Calu3 (cell line): ENCODE measurements at regions of chr12 and their contacts with region 1.

Region 1: DNA sequence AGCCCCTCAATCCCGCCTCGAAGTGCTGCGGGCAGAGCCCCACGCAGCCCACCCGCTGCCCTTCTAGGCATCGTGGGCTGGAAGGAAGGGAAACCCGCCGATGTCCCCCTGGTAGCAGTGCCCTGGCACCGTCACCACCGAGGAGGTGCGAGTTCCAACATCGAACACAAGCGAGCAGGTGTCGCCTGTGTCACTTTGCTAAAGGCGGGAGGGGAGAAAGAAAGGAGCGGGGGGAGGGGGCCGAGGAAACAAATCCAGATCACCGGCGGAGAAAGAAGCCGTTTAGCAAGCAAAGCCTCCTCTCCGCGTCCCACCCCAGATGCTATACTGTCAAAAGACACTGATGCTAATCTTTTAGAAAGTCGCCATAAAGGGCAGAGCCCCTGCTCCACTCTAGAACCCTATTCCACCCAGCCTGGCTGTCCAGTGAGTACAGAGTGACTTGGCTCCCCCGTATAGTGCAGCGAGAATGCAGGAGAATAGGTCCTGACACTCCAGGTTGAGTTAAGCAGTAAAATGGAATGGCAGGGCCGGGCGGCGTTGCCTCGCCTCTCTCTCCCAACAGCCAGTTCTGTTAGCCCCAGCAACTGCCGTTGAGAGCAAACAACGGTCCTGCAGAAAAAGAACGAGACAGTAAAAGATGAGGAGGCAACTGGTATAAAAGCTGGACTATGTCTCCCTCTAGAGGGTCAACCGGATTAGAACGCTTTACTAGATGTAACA is 67.9 kb upstream of the USP15 start:
- DNase-seq: peak; percentile 75
- H3K4me3 Mint-ChIP-seq: peak overlapping the region; percentile 72
- H3K27ac Mint-ChIP-seq: no peak overlapping the region
- H3K4me1 Mint-ChIP-seq: peaks cover 9% of the 10 kb centered on the region
- H3K27me3 Mint-ChIP-seq: peaks cover 23% of the 10 kb centered on the region
- CTCF ChIP-seq: no peak

Region 2: GRCh38 chr12:60394665-60395064 is 1797.7 kb before region 1 on chr12:
- CTCF ChIA-PET with region 1: no interaction called
- intact Hi-C with region 1: no loop called
- DNase-seq: no peak
- H3K4me3 Mint-ChIP-seq: no peak overlapping the region
- H3K27ac Mint-ChIP-seq: peak overlapping the region; percentile 22
- H3K4me1 Mint-ChIP-seq: peaks cover 14% of the 10 kb centered on the region
- H3K27me3 Mint-ChIP-seq: no peaks in the 10 kb centered on the region
- CTCF ChIP-seq: no peak

Region 3: GRCh38 chr12:60494244-60494643 is 1698.1 kb before region 1 on chr12:
- CTCF ChIA-PET with region 1: no interaction called
- intact Hi-C with region 1: loop called (anchors 10 kb)
- DNase-seq: peak; percentile 13
- H3K4me3 Mint-ChIP-seq: no peak overlapping the region
- H3K27ac Mint-ChIP-seq: no peak overlapping the region
- H3K4me1 Mint-ChIP-seq: peaks cover 9% of the 10 kb centered on the region
- H3K27me3 Mint-ChIP-seq: no peaks in the 10 kb centered on the region
- CTCF ChIP-seq: peak; percentile 59

Region 4: DNA sequence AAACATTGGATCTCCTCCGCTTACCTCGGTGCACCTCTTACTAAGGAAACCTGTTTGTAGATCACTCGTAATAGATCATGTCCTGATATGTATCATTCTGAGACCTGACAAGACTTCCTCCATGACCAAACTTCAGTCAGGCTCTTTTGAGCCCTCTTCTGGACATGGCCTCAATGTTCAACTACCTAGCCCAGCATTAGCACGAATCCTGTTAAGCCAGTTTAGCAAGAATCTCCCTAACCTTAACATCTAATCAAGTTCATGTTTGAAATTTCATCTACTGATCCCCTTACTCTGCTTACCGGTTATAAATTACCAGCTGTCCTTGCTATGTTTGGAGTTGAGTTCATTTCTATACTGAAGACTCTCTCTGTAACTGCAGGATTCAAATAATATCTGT is 646.0 kb before region 1 on chr12:
- CTCF ChIA-PET with region 1: no interaction called
- intact Hi-C with region 1: loop called (anchors 5 kb)
- DNase-seq: peak; percentile 52
- H3K4me3 Mint-ChIP-seq: no peak overlapping the region
- H3K27ac Mint-ChIP-seq: no peak overlapping the region
- H3K4me1 Mint-ChIP-seq: peaks cover 7% of the 10 kb centered on the region
- H3K27me3 Mint-ChIP-seq: no peaks in the 10 kb centered on the region
- CTCF ChIP-seq: peak; percentile 30

Region 5: GRCh38 chr12:61654698-61655097 is 537.6 kb before region 1 on chr12:
- CTCF ChIA-PET with region 1: no interaction called
- intact Hi-C with region 1: loop called (anchors 10 kb)
- DNase-seq: peak; percentile 21
- H3K4me3 Mint-ChIP-seq: no peak overlapping the region
- H3K27ac Mint-ChIP-seq: no peak overlapping the region
- H3K4me1 Mint-ChIP-seq: no peaks in the 10 kb centered on the region
- H3K27me3 Mint-ChIP-seq: no peaks in the 10 kb centered on the region
- CTCF ChIP-seq: no peak

Region 6: GRCh38 chr12:61993734-61994345 is 198.5 kb before region 1 on chr12:
- CTCF ChIA-PET with region 1: no interaction called
- intact Hi-C with region 1: loop called (anchors 2 kb)
- DNase-seq: peak; percentile 30
- H3K4me3 Mint-ChIP-seq: no peak overlapping the region
- H3K27ac Mint-ChIP-seq: no peak overlapping the region
- H3K4me1 Mint-ChIP-seq: no peaks in the 10 kb centered on the region
- H3K27me3 Mint-ChIP-seq: no peaks in the 10 kb centered on the region
- CTCF ChIP-seq: peak; percentile 55

Region 7: DNA sequence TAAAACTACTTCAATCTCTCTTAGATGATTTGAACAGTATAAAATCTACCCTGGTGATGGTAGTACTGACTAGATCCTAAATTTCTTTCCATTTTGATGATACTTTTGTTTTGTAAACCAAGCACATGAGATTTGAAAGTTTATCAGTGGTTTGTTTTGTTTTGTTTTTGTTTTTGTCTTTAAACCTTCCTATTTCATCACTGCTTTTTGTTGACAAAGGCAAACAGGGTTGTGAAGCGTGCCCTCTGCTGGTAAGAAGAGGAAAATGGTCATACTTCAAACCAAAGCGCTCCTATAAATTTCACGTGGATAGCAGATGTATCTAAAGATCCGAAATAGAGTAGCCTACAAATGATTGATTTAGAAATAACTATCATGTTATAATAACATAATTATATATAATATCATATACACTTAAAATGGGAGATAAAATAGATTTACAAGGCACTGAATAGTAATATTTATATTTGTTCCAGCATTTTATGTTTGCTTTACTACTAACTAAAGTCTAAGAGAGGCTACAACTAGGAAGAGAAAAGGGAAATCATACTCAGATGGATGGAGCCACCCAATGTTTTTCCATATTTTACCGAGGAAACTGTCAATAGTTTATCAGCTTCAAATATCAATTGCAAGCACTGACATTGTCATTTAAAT is 186.1 kb before region 1 on chr12:
- CTCF ChIA-PET with region 1: no interaction called
- intact Hi-C with region 1: loop called (anchors 2 kb)
- DNase-seq: peak; percentile 45
- H3K4me3 Mint-ChIP-seq: no peak overlapping the region
- H3K27ac Mint-ChIP-seq: no peak overlapping the region
- H3K4me1 Mint-ChIP-seq: no peaks in the 10 kb centered on the region
- H3K27me3 Mint-ChIP-seq: no peaks in the 10 kb centered on the region
- CTCF ChIP-seq: peak; percentile 42

Region 8: DNA sequence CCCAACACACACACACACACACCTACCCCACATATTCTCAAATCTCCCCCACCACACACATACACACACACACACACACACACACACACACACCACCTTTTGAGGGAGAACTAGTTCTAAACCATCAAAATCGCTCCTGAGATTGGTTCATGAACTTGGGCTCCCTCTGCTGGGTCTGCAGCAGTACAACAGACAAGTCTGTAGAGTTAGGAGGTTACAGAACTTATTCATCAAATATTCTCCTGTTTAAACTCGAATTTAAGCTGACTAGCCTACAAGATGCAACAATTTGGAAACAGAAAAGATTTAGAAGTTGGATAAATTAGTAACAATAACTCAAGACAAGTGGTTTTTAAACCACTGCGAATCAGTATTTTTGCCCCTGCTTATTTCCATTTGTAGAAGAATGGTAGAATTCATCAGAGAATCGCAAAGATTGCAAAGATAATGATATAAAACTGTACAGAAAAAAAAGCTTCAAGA is 68.6 kb before region 1 on chr12:
- CTCF ChIA-PET with region 1: no interaction called
- intact Hi-C with region 1: loop called (anchors 2 kb)
- DNase-seq: peak; percentile 68
- H3K4me3 Mint-ChIP-seq: no peak overlapping the region
- H3K27ac Mint-ChIP-seq: no peak overlapping the region
- H3K4me1 Mint-ChIP-seq: peaks cover 35% of the 10 kb centered on the region
- H3K27me3 Mint-ChIP-seq: no peaks in the 10 kb centered on the region
- CTCF ChIP-seq: no peak